MCF 10A (cell line): ENCODE measurements at regions of chr2 and their contacts with region 1.

Region 1: DNA sequence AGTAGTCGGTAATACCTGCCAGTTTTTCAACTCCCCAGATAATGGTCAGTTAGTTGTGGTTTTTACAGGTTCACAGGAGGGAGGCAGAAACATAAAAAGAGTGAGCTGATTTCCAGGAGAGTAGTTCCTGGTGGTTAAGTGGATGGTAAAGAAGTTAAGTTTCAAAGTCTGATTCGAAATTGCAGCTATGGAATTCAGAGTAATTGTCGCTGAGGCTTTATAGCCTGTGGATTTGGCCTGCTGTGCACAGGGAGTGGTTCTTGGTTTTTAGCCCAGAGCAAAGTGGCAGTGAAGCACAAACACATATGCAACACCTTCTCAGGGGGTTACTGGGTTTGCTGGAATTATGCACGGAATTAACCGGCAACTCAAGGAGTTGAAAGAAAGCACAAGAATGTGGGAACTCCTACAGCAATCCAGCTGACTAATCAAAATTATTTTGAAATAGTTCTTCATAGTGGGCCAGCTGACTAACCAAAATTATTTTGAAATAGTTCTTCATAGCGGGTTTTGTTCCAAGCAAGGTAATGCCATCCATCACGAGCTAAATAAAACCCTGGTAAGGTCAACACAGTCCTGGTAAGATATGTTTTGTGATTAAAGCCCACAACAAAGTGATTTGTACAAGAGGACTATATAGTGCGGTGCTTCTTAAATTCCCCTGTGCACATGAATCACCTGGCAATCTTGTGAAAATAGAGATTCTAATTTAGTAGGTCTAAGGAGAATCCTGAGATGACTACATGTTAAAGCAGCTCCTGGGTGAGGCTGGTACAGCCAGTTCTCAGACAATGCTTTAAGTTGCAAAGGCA is 94.4 kb downstream of the SGPP2 start:
- DNase-seq: peak; percentile 96
- H3K4me3 Mint-ChIP-seq: peak overlapping the region; percentile 25
- H3K27ac Mint-ChIP-seq: peak overlapping the region; percentile 82
- H3K4me1 Mint-ChIP-seq: peaks cover 47% of the 10 kb centered on the region
- H3K27me3 Mint-ChIP-seq: no peaks in the 10 kb centered on the region
- CTCF ChIP-seq: no peak

Region 2: GRCh38 chr2:222424729-222425671 is 93.8 kb before region 1 on chr2:
- CTCF ChIA-PET with region 1: interaction called, 3 read pairs
- POLR2A ChIA-PET with region 1: interaction called, 58 read pairs
- intact Hi-C with region 1: loop called (anchors 1 kb)
- DNase-seq: peak; percentile 21
- H3K4me3 Mint-ChIP-seq: peak overlapping the region; percentile 82
- H3K27ac Mint-ChIP-seq: no peak overlapping the region
- H3K4me1 Mint-ChIP-seq: peaks cover 33% of the 10 kb centered on the region
- H3K27me3 Mint-ChIP-seq: no peaks in the 10 kb centered on the region
- CTCF ChIP-seq: no peak

Region 3: GRCh38 chr2:222451224-222451674 is 67.5 kb before region 1 on chr2:
- CTCF ChIA-PET with region 1: interaction called, 6 read pairs
- POLR2A ChIA-PET with region 1: interaction called, 72 read pairs
- intact Hi-C with region 1: loop called (anchors 2 kb)
- DNase-seq: no peak
- H3K4me3 Mint-ChIP-seq: peak overlapping the region; percentile 30
- H3K27ac Mint-ChIP-seq: peak overlapping the region; percentile 61
- H3K4me1 Mint-ChIP-seq: peaks cover 62% of the 10 kb centered on the region
- H3K27me3 Mint-ChIP-seq: no peaks in the 10 kb centered on the region
- CTCF ChIP-seq: no peak

Region 4: DNA sequence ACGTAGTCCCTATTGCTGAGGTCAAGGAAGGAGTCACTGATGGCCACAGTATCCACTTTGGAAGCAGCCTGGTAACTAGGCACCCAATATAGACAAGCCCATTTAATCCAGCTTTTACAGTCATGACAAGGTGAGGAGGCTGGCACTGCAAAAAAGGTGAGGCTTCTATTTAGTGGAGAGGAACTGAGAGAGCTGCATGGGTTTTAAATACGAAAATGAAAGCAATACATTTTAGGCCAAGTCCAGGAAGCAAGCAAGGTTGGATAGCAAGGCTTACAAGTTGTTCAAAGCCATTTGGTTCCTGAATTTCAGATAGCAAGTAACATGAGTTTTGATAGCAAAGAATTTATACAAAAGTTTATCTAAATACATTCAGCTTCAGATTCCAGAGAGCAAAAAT is 14.1 kb before region 1 on chr2:
- CTCF ChIA-PET with region 1: interaction called, 3 read pairs
- POLR2A ChIA-PET with region 1: interaction called, 30 read pairs
- intact Hi-C with region 1: no loop called
- DNase-seq: no peak
- H3K4me3 Mint-ChIP-seq: no peak overlapping the region
- H3K27ac Mint-ChIP-seq: no peak overlapping the region
- H3K4me1 Mint-ChIP-seq: peaks cover 6% of the 10 kb centered on the region
- H3K27me3 Mint-ChIP-seq: no peaks in the 10 kb centered on the region
- CTCF ChIP-seq: no peak

Region 5: DNA sequence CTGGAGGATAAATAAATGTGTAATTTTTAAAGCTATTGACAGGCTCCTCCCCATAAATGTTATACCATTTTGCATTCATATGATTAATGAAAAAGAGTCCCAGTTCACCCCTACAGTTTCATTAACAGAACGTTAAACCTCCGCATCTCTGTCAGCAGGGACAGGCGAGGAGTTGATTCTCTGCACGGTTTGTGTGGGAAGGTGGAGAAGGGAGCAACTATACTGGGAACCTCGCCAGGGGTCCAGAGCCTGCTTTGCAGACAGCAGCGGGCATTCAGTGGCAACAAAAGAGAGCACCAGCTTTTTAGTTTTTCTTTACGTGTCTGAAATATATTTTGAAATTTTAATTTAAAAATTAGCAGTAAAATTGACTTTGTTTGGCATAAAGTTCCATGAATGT is 35.7 kb after region 1 on chr2:
- CTCF ChIA-PET with region 1: no interaction called
- POLR2A ChIA-PET with region 1: interaction called, 11 read pairs
- intact Hi-C with region 1: no loop called
- DNase-seq: no peak
- H3K4me3 Mint-ChIP-seq: no peak overlapping the region
- H3K27ac Mint-ChIP-seq: no peak overlapping the region
- H3K4me1 Mint-ChIP-seq: peaks cover 4% of the 10 kb centered on the region
- H3K27me3 Mint-ChIP-seq: no peaks in the 10 kb centered on the region
- CTCF ChIP-seq: no peak